ENCODE measurements at regions of chr7 and their contacts with region 1.

Region 1: DNA sequence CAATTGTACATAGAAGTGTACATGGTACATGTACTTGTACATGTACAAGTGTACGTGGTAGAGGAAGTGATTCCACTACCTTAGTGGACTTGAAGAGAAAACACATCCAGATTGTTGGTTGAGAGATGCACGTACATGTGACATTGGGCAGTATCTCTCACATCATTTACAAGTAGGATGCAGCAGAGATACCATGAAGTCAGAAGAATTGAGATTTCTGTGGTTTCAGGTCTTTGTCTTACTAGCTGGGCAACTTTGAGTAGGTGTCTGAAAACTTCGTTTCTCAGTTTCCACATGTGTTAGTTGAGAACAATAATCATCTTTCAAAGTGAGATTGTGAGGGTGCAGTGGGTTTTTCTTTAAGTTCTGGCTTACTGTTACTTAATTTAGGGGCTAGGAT is 21.5 kb downstream of the CLDN12 start:
- DNase-seq: no peak
- ATAC-seq: no peak
- H3K4me3 ChIP-seq: no peak overlapping the region
- H3K27ac ChIP-seq: no peak overlapping the region
- H3K4me1 ChIP-seq: no peaks in the 10 kb centered on the region
- H3K27me3 ChIP-seq: no peaks in the 10 kb centered on the region
- CTCF ChIP-seq: no peak
- POLR2A ChIP-seq: no peak

Region 2: GRCh38 chr7:90155206-90155605 is 269.5 kb before region 1 on chr7:
- in situ Hi-C with region 1: loop called in 2 of 4 experiments (anchors 10 to 25 kb)
- intact Hi-C with region 1: loop called (anchors 2 kb)
- DNase-seq: no peak
- ATAC-seq: no peak
- H3K4me3 ChIP-seq: no peak overlapping the region
- H3K27ac ChIP-seq: no peak overlapping the region
- H3K4me1 ChIP-seq: peaks cover 0 to 10% of the 10 kb centered on the region in 2 donors
- H3K27me3 ChIP-seq: no peaks in the 10 kb centered on the region
- CTCF ChIP-seq: no peak
- POLR2A ChIP-seq: no peak

Region 3: GRCh38 chr7:90165724-90166123 is 259.0 kb before region 1 on chr7:
- in situ Hi-C with region 1: loop called in 2 of 4 experiments (anchors 10 to 25 kb)
- intact Hi-C with region 1: no loop called
- DNase-seq: no peak
- ATAC-seq: no peak
- H3K4me3 ChIP-seq: no peak overlapping the region
- H3K27ac ChIP-seq: no peak overlapping the region
- H3K4me1 ChIP-seq: no peaks in the 10 kb centered on the region
- H3K27me3 ChIP-seq: no peaks in the 10 kb centered on the region
- CTCF ChIP-seq: no peak
- POLR2A ChIP-seq: no peak

Region 4: GRCh38 chr7:90173127-90173844 is 251.4 kb before region 1 on chr7:
- in situ Hi-C with region 1: loop called in 2 of 4 experiments (anchors 10 to 25 kb)
- intact Hi-C with region 1: no loop called
- DNase-seq: no peak
- ATAC-seq: no peak
- H3K4me3 ChIP-seq: no peak overlapping the region
- H3K27ac ChIP-seq: no peak overlapping the region
- H3K4me1 ChIP-seq: no peaks in the 10 kb centered on the region
- H3K27me3 ChIP-seq: no peaks in the 10 kb centered on the region
- CTCF ChIP-seq: no peak
- POLR2A ChIP-seq: no peak

Region 5: GRCh38 chr7:90312745-90313144 is 112.0 kb before region 1 on chr7:
- in situ Hi-C with region 1: no loop called
- intact Hi-C with region 1: loop called (anchors 5 kb)
- DNase-seq: no peak
- ATAC-seq: no peak
- H3K4me3 ChIP-seq: no peak overlapping the region
- H3K27ac ChIP-seq: no peak overlapping the region
- H3K4me1 ChIP-seq: no peaks in the 10 kb centered on the region
- H3K27me3 ChIP-seq: no peaks in the 10 kb centered on the region
- CTCF ChIP-seq: no peak
- POLR2A ChIP-seq: no peak

Region 6: GRCh38 chr7:92421676-92422435 is 1997.1 kb after region 1 on chr7:
- in situ Hi-C with region 1: no loop called
- intact Hi-C with region 1: loop called (anchors 5 kb)
- DNase-seq: no peak
- ATAC-seq: no peak
- H3K4me3 ChIP-seq: no peak overlapping the region
- H3K27ac ChIP-seq: no peak overlapping the region
- H3K4me1 ChIP-seq: no peaks in the 10 kb centered on the region
- H3K27me3 ChIP-seq: peaks cover 0 to 5% (median 3%) of the 10 kb centered on the region in 3 donors
- CTCF ChIP-seq: no peak
- POLR2A ChIP-seq: no peak